ENCODE measurements at regions of chr5 and their contacts with region 1.

Region 1: GRCh38 chr5:171907725-171908343 is 98.6 kb downstream of the FBXW11 start:
- DNase-seq: peak; percentile 46
- H3K4me3 Mint-ChIP-seq: no peak overlapping the region
- H3K27ac Mint-ChIP-seq: peak overlapping the region; percentile 74
- H3K4me1 Mint-ChIP-seq: peaks cover 60% of the 10 kb centered on the region
- H3K27me3 Mint-ChIP-seq: no peaks in the 10 kb centered on the region

Region 2: DNA sequence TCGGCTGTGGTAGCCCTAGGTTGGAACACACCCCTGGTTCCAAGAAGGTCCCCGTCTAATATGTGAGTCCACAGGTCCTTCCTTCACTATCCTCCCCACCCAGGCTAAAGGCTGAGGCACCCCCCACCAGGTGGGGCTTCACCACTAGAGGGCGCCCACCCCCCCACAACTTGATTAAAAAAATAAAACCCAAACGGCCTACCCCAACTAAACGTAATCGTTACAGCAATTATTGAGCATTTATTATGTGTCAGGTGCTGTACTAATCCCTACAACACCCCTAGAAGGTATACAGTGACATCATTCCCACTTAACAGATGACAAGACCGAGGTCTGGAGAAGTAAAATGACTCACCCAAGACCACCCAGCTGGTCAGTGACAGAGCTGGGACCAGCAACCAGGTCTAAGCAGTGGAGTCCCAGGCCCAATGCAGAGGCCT is 423.4 kb before region 1 on chr5:
- CTCF ChIA-PET with region 1: no interaction called
- POLR2A ChIA-PET with region 1: no interaction called
- intact Hi-C with region 1: loop called (anchors 1 kb)
- DNase-seq: peak; percentile 62
- H3K4me3 Mint-ChIP-seq: no peak overlapping the region
- H3K27ac Mint-ChIP-seq: no peak overlapping the region
- H3K4me1 Mint-ChIP-seq: peaks cover 3% of the 10 kb centered on the region
- H3K27me3 Mint-ChIP-seq: peaks cover 7% of the 10 kb centered on the region

Region 3: GRCh38 chr5:171629221-171630026 is 278.4 kb before region 1 on chr5:
- CTCF ChIA-PET with region 1: no interaction called
- POLR2A ChIA-PET with region 1: no interaction called
- intact Hi-C with region 1: loop called (anchors 1 kb)
- DNase-seq: no peak
- H3K4me3 Mint-ChIP-seq: no peak overlapping the region
- H3K27ac Mint-ChIP-seq: no peak overlapping the region
- H3K4me1 Mint-ChIP-seq: no peaks in the 10 kb centered on the region
- H3K27me3 Mint-ChIP-seq: peaks cover 21% of the 10 kb centered on the region

Region 4: DNA sequence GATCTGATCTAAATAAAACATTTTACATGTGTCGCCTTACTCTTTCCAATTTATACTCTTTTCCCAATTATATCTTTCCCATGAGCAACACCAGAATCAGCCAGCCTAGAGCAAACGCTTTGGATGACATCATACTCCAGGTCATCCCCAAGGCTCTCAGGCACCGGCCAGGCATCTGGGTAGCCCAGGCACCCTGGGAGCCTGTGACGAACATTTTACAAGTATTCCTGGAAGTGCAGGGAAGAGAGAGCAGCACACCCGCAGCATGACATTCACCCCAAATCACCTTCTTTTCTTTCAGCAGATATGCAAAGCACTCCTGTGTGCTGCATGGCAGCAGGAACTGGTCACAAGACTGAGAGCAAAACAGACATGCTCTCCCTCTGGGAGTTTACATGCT is 197.9 kb before region 1 on chr5:
- CTCF ChIA-PET with region 1: no interaction called
- POLR2A ChIA-PET with region 1: no interaction called
- intact Hi-C with region 1: no loop called
- DNase-seq: no peak
- H3K4me3 Mint-ChIP-seq: no peak overlapping the region
- H3K27ac Mint-ChIP-seq: no peak overlapping the region
- H3K4me1 Mint-ChIP-seq: no peaks in the 10 kb centered on the region
- H3K27me3 Mint-ChIP-seq: peaks cover 6% of the 10 kb centered on the region

Region 5: GRCh38 chr5:171961117-171961516 is 53.3 kb after region 1 on chr5:
- CTCF ChIA-PET with region 1: interaction called, 13 read pairs
- POLR2A ChIA-PET with region 1: interaction called, 5 read pairs
- intact Hi-C with region 1: loop called (anchors 1 kb)
- DNase-seq: peak; percentile 59
- H3K4me3 Mint-ChIP-seq: no peak overlapping the region
- H3K27ac Mint-ChIP-seq: peak overlapping the region; percentile 53
- H3K4me1 Mint-ChIP-seq: peaks cover 87% of the 10 kb centered on the region
- H3K27me3 Mint-ChIP-seq: no peaks in the 10 kb centered on the region

Region 6: GRCh38 chr5:172035039-172035438 is 127.2 kb after region 1 on chr5:
- CTCF ChIA-PET with region 1: interaction called, 99 read pairs
- POLR2A ChIA-PET with region 1: no interaction called
- intact Hi-C with region 1: loop called (anchors 1 kb)
- DNase-seq: peak; percentile 27
- H3K4me3 Mint-ChIP-seq: no peak overlapping the region
- H3K27ac Mint-ChIP-seq: no peak overlapping the region
- H3K4me1 Mint-ChIP-seq: peaks cover 12% of the 10 kb centered on the region
- H3K27me3 Mint-ChIP-seq: no peaks in the 10 kb centered on the region

Region 7: DNA sequence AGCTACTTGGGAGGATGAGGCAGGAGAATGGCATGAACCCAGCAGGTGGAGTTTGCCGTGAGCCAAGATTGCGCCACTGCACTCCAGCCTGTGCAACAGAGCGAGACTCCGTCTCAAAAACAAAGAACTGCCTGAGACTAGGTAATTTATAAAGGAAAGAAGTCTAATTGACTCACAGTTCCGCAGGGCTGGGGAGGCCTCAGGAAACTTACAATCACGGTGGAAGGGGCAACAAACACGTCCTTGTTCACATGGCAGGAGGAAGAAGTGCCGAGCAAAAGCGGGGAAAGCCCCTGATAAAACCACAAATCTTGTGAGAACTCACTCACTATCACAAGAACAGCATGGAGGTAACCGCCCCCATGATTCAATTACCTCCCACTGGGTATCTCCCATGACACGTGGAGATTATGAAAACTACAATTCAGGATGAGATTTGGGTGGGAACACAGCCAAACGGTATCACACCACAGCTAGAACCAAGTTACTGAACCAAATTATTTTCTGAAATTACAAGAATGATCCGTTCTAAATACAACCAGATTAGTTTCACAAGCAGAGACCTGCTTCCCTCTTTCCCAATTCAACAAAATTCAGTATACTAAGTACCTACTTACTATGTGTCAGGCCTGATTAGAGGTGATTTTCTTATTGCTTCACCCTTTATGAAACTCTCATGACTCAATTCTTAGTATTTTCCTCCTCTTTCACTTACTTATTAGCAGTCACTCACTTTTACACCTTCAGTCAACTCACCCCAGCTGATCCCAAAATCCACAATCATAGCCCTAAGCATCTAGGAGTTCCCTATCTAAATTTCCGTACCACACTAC is 367.3 kb after region 1 on chr5:
- CTCF ChIA-PET with region 1: no interaction called
- POLR2A ChIA-PET with region 1: no interaction called
- intact Hi-C with region 1: loop called (anchors 1 kb)
- DNase-seq: peak; percentile 82
- H3K4me3 Mint-ChIP-seq: no peak overlapping the region
- H3K27ac Mint-ChIP-seq: peak overlapping the region; percentile 36
- H3K4me1 Mint-ChIP-seq: peaks cover 42% of the 10 kb centered on the region
- H3K27me3 Mint-ChIP-seq: no peaks in the 10 kb centered on the region

Measured in activated CD4-positive, alpha-beta memory T cell treated with anti-CD3 and anti-CD28 coated beads for 36 hours (primary cell).